ENCODE measurements at regions of chr3 and their contacts with region 1.

Region 1: GRCh38 chr3:141192345-141192744 is 39.3 kb upstream of the PXYLP1 start:
- DNase-seq: peak; percentile 84 to 97
- H3K4me3 ChIP-seq: no peak overlapping the region
- H3K4me1 ChIP-seq: no peaks in the 10 kb centered on the region
- H3K27me3 ChIP-seq: peaks cover 4% of the 10 kb centered on the region; the same call in 1 of the 2 replicates

Region 2: DNA sequence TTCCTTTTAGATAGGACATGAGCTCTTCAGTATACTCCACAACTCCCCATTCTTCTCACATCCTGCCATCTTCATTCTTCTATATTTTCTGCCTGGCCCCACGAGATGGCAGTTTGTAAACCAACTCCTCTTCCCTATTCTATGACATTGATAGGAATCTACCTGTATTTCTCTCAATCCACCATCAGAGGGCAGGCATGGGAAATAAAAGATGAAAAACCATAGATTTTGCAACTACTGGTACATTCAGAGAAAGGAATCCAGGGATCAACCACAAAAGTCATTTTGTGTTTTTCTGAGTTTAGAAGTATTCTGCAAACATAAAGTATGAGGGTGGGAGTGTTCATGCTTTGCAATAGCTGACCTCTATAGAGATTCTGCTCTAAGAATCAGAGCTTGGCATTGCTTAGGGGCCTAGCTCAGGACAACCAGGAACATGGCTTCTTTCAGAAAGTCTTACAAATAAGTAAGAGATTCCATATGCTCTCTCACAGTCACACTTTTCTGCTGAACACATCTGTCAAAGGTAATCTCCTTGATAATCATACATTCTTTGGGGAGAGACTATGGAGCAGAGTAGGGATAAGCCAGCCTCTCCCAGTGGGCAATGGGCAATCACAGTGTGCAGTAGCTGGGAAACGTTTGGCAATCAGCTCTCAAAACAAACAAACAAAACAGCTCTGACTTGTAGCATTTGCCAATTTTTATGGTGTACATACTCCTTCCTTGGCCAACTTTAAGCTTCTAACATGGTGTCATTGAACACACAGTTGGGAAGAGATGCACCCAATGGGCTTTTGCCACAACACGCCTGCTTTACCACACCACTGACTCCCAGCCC is 293.8 kb before region 1 on chr3:
- in situ Hi-C with region 1: loop called (anchors 10 kb)
- DNase-seq: peak; percentile 25 to 28
- H3K4me3 ChIP-seq: no peak overlapping the region
- H3K4me1 ChIP-seq: no peaks in the 10 kb centered on the region
- H3K27me3 ChIP-seq: peaks cover 5% of the 10 kb centered on the region; the same call in 1 of the 2 replicates

Region 3: DNA sequence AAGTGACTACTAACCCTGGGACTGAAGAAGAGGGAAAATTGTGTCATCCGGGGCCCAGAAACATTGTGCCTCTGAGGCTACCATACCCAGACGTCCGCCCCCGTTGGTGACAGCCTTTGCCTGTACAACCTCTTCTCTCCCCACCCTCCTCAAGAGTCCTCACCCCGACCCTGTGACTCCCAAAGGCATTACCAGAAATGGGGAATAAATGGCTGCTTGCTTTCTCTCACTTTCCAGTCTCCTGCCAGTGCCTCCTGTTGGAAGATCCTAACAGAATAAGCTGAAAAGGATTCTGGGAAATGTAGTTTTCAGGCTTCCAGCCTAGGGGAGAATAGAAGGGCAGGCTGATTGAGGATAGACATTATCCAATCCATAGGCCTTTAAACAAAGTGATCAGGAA is 281.5 kb before region 1 on chr3:
- in situ Hi-C with region 1: no loop called
- DNase-seq: peak in 1 of 2 experiments; percentile 7
- H3K4me3 ChIP-seq: no peak overlapping the region
- H3K4me1 ChIP-seq: no peaks in the 10 kb centered on the region
- H3K27me3 ChIP-seq: peaks cover 15% of the 10 kb centered on the region

Region 4: DNA sequence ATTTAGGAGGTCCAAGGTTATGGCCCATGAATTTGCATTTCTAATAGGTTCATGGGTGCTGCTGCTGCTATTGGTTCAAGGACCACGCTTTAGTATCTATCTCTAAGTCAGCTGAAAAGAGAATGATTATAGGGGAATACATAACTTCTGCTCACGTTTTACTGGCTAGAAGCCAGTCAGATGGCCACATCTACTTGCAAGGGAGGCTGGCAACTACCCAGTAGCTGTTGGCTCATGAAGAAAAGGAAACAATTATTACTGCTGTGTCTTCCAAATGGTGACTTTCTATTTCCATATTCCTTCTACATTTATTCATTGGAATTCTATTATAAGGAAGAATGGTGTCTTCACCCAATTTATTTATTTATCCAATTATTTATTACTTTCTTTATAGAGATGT is 196.5 kb before region 1 on chr3:
- in situ Hi-C with region 1: loop called (anchors 5 kb)
- DNase-seq: no peak
- H3K4me3 ChIP-seq: no peak overlapping the region
- H3K4me1 ChIP-seq: no peaks in the 10 kb centered on the region
- H3K27me3 ChIP-seq: no peaks in the 10 kb centered on the region

Region 5: GRCh38 chr3:141311496-141312353 is 119.4 kb after region 1 on chr3:
- in situ Hi-C with region 1: no loop called
- DNase-seq: peak; percentile 97 to 99
- H3K4me3 ChIP-seq: peak overlapping the region; percentile 66
- H3K4me1 ChIP-seq: peaks cover 9% of the 10 kb centered on the region
- H3K27me3 ChIP-seq: no peaks in the 10 kb centered on the region